Mucosa of descending colon (tissue), 3 donors: ENCODE measurements at regions of chr5 and their contacts with region 1.

Region 1: GRCh38 chr5:132426525-132427138 is 57.1 kb downstream of the SLC22A5 start:
- DNase-seq: peak; percentile 73 to 92 (median 78)
- ATAC-seq: peak; percentile 50
- H3K4me3 ChIP-seq: no peak overlapping the region
- H3K4me1 ChIP-seq: peaks cover 92% of the 10 kb centered on the region
- CTCF ChIP-seq: no peak

Region 2: GRCh38 chr5:132466433-132467286 is 40.0 kb after region 1 on chr5:
- intact Hi-C with region 1: loop called in 1 of 2 experiments (anchors 5 kb)
- DNase-seq: peak; percentile 61 to 89 (median 74)
- ATAC-seq: peak; percentile 56
- H3K4me3 ChIP-seq: no peak overlapping the region
- H3K4me1 ChIP-seq: peaks cover 44% of the 10 kb centered on the region
- CTCF ChIP-seq: no peak

Region 3: DNA sequence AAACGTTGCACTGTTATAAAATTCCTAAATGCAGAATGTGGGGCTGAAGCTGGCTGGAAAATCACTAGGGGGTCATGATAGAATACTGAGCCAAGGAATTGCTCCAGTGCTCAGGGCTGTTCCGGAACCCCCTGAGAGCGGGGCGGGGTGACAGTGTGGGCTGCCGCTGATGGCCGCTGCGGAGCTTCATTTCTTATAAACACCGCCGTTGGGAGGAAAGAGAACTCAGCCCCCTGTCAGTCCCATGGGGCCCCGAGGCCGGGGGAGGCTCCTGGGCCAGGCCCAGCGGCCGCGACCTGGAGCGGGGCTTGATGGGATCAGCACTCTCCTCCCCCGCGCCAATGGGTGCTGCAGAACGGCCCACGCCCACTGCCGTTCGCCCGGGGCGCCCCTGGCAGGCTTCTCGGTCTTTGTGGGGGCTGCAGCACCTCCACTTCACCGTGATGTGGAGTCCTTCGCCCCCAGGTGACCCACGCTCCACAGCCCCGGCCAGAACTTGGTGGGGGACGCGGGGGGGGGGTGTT is 69.1 kb after region 1 on chr5:
- intact Hi-C with region 1: loop called (anchors 5 to 10 kb)
- DNase-seq: peak; percentile 85 to 93 (median 90)
- ATAC-seq: peak; percentile 49
- H3K4me3 ChIP-seq: peak overlapping the region; percentile 29
- H3K4me1 ChIP-seq: peaks cover 46% of the 10 kb centered on the region
- CTCF ChIP-seq: no peak

Region 4: GRCh38 chr5:132673939-132674630 is 247.5 kb after region 1 on chr5 and contains the start of gene IL4:
- intact Hi-C with region 1: no loop called
- DNase-seq: no peak
- ATAC-seq: no peak
- H3K4me3 ChIP-seq: no peak within 1 kb of the TSS
- H3K4me1 ChIP-seq: no peaks in the 10 kb centered on the region
- CTCF ChIP-seq: no peak
- total RNA-seq, gene IL4: not detected